ENCODE measurements at regions of chr4 and their contacts with region 1.

Region 1: GRCh38 chr4:110049951-110050925 is 137.6 kb downstream of the EGF start:
- DNase-seq: peak; percentile 70
- H3K4me3 Mint-ChIP-seq: no peak overlapping the region
- H3K27ac Mint-ChIP-seq: no peak overlapping the region
- H3K4me1 Mint-ChIP-seq: peaks cover under 1% of the 10 kb centered on the region
- H3K27me3 Mint-ChIP-seq: no peaks in the 10 kb centered on the region

Region 2: DNA sequence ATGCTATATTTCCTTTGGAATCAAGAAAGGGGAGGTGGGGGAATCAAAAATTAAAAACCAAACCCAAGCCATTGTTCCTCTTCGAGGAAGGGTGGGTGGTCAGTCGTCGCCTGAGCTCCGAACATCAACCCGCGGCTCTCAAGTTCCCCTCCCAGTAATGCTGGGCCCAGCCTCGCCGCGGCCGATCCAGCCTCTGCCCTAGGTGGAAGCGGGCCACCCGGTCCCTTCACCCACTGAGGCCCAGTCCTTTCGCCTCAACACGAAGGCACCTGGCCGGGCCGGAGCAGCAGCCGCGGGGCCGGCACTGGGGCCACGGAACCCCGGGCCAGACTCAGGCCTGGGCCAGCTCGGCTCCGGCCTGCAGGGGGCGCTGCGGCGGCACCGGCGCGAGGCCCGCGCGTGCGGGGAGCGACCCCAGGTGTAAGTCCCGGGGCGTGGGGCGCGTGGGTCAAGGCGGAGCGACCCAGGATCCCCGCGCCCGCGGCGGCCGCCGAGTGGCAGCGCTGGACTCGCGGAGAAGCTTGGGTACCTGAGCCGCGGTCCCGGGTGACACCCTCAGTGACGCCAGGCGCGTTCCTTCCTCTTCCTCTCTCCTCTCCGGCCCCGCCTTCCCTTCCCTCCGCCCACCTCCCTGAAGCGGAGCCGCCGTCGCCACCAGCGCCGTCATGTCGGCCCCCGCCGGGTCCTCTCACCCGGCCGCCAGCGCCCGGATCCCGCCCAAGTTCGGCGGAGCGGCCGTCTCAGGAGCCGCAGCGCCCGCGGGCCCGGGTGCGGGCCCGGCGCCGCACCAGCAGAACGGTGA is 616.8 kb before region 1 on chr4 and contains the start of gene SEC24B:
- CTCF ChIA-PET with region 1: no interaction called
- DNase-seq: peak; percentile 94
- H3K4me3 Mint-ChIP-seq: peak within 1 kb of the TSS; percentile 84
- H3K27ac Mint-ChIP-seq: peak within 1 kb of the TSS; percentile 92
- H3K4me1 Mint-ChIP-seq: peaks cover 52% of the 10 kb centered on the region
- H3K27me3 Mint-ChIP-seq: no peaks in the 10 kb centered on the region

Region 3: DNA sequence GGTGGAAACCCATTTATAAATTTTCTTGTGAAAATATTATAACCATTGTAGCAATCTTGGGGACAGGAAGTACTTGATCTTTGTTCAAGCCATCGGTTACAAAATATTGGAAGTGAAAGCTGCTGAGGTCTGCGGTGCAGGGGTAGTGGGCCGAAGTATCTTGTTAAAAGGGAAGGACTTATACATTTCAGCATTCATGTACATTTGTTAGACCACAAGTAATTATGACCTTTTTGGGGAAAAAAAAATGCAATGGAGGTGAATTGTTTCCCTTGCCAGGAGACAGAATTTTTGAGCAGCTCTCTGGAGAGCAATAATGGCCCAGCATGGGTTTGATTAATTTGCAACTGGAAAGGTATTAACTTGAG is 16.2 kb before region 1 on chr4:
- CTCF ChIA-PET with region 1: interaction called, 14 read pairs
- DNase-seq: no peak
- H3K4me3 Mint-ChIP-seq: no peak overlapping the region
- H3K27ac Mint-ChIP-seq: no peak overlapping the region
- H3K4me1 Mint-ChIP-seq: peaks cover 9% of the 10 kb centered on the region
- H3K27me3 Mint-ChIP-seq: peaks cover 54% of the 10 kb centered on the region

Region 4: GRCh38 chr4:110211007-110211769 is 160.9 kb after region 1 on chr4:
- CTCF ChIA-PET with region 1: interaction called, 11 read pairs
- DNase-seq: peak; percentile 38
- H3K4me3 Mint-ChIP-seq: no peak overlapping the region
- H3K27ac Mint-ChIP-seq: no peak overlapping the region
- H3K4me1 Mint-ChIP-seq: peaks cover 2% of the 10 kb centered on the region
- H3K27me3 Mint-ChIP-seq: no peaks in the 10 kb centered on the region

Measured in activated naive CD4-positive, alpha-beta T cell treated with anti-CD3 and anti-CD28 coated beads, Interleukin-2, amount 10 ng/mL, durations not matched to agents 7 days and 5 days (primary cell).